Breast epithelium (tissue), 4 donors: ENCODE measurements at regions of chr10 and their contacts with region 1.

Region 1: DNA sequence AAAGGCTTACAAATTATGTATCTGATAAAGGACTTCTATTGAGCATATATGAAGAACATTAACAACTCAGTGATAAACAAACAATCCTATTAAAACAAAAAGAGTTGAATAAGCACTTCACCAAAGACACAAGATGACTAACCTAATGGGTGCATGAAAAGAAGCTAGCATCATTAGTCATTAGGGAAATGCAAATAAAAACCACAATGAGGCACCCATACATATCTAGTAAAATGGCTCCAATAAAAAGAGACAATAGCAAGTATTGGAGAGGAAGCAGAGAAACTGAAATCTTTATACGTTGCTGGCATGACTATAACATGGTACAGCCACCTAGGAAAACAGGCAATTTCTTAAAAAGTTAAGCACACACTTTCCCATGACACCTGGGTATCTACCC is 77.6 kb upstream of the ZMIZ1 start:
- DNase-seq: no peak
- H3K4me3 ChIP-seq: no peak overlapping the region
- H3K27ac ChIP-seq: no peak overlapping the region
- H3K4me1 ChIP-seq: no peaks in the 10 kb centered on the region
- H3K27me3 ChIP-seq: no peaks in the 10 kb centered on the region
- CTCF ChIP-seq: no peak
- POLR2A ChIP-seq: no peak

Region 2: DNA sequence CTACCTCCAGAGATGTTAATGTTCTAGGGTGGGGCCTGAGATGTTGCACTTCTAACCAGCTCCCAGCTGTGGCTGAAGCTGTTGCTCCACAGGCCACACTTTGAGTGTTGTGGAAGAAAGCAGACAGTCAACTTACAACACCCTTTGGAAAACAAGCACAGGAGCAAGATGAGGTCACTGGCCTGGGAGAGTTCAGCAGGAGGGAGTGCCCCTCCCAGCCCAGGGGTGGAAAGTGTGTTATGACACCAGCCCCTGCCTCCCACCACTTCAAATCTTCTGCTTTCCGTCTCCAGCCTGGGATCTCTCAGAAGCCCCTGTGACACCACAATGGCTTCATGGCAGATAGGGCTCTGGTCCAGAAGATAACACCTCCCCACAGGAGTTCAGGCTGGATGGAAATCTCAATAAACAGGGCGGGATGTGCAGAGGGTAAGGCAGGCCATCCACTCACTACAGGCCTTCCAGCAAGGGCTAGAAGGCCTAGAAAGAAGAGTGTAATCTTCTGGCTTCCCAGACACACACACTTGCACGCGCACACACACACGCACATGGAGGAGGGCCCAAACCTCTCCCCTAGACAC is 28.8 kb after region 1 on chr10:
- intact Hi-C with region 1: loop called (anchors 2 kb)
- DNase-seq: no peak
- H3K4me3 ChIP-seq: no peak overlapping the region
- H3K27ac ChIP-seq: peak overlapping the region in 1 of 2 donors; percentile 81
- H3K4me1 ChIP-seq: no peaks in the 10 kb centered on the region
- H3K27me3 ChIP-seq: no peaks in the 10 kb centered on the region
- CTCF ChIP-seq: no peak
- POLR2A ChIP-seq: no peak